ENCODE measurements at regions of chr3 and their contacts with region 1.

Region 1: DNA sequence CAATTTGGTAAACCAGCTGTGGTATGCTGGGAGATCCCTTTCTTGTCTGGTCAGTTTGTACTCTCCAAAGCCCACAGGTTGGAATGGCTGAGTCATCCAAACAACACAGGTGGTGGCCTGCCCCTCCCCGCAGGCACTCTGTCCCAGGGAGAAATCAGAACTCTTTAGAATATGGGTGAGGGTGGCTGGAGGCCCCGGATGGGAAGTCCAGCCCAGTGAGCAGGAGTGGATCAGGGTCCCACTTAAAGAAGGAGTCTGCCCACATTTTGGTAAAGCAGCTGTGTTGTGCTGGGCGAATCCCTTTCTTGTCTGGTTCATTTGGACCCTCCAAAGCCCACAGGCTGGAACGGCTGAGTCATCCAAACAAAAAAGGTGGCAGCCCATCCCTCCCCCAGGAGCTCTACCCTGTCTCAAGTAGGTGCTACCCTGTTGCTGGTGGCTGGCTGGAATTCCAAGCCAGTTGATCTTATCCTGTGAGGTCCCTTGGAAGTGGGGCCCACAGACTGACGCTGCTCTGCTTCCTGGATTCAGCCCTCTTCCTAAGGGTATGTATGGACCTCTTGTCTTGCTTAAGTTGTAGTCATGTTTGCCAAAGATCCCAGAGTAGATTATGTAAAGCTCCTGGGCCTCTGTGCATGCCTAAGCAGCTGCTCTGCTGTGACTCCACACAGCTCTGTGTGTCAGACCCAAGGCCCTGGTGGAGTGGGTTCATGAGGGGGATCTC is 44.6 kb downstream of the CCR1 start:
- DNase-seq: peak; percentile 58
- H3K4me3 Mint-ChIP-seq: no peak overlapping the region
- H3K27ac Mint-ChIP-seq: peak overlapping the region; percentile 40
- H3K4me1 Mint-ChIP-seq: peaks cover 24% of the 10 kb centered on the region
- H3K27me3 Mint-ChIP-seq: no peaks in the 10 kb centered on the region
- CTCF ChIP-seq: no peak

Region 2: GRCh38 chr3:46089237-46090011 is 74.1 kb before region 1 on chr3:
- CTCF ChIA-PET with region 1: interaction called, 3 read pairs
- intact Hi-C with region 1: loop called (anchors 5 kb)
- DNase-seq: peak; percentile 35
- H3K4me3 Mint-ChIP-seq: no peak overlapping the region
- H3K27ac Mint-ChIP-seq: no peak overlapping the region
- H3K4me1 Mint-ChIP-seq: peaks cover 50% of the 10 kb centered on the region
- H3K27me3 Mint-ChIP-seq: no peaks in the 10 kb centered on the region
- CTCF ChIP-seq: no peak

Region 3: GRCh38 chr3:46110701-46111493 is 52.6 kb before region 1 on chr3:
- CTCF ChIA-PET with region 1: no interaction called
- intact Hi-C with region 1: loop called (anchors 5 kb)
- DNase-seq: peak; percentile 79
- H3K4me3 Mint-ChIP-seq: peak overlapping the region; percentile 58
- H3K27ac Mint-ChIP-seq: peak overlapping the region; percentile 69
- H3K4me1 Mint-ChIP-seq: peaks cover 64% of the 10 kb centered on the region
- H3K27me3 Mint-ChIP-seq: no peaks in the 10 kb centered on the region
- CTCF ChIP-seq: no peak

Measured in Calu3 (cell line).